H1 (cell line): ENCODE measurements at regions of chr22 and their contacts with region 1.

Region 1: GRCh38 chr22:25110846-25111578 is 88.6 kb upstream of the CRYBB3 start:
- DNase-seq: peak; percentile 61 to 81
- H3K4me3 ChIP-seq: peak overlapping the region; percentile 52 to 81 (median 66)
- H3K27ac ChIP-seq: peak overlapping the region; percentile 73
- H3K4me1 ChIP-seq: peaks cover 0 to 19% (median 9%) of the 10 kb centered on the region in 4 experiments; a peak in 6 of 7 replicates
- H3K27me3 ChIP-seq: 0 out of 7 replicates have a peak, but pooled peaks cover 0 to 2% (median 0%) of the 10 kb centered on the region in 4 experiments
- CTCF ChIP-seq: peak; percentile 59 to 91 (median 70)
- EP300 ChIP-seq: peak in 1 of 2 experiments; percentile 49; a peak in 1 of 3 replicates
- POLR2A ChIP-seq: no peak
- RAD21 ChIP-seq: peak; percentile 56 to 65

Region 2: GRCh38 chr22:25013607-25014006 is 97.4 kb before region 1 on chr22:
- CTCF ChIA-PET with region 1: no interaction called
- POLR2A ChIA-PET with region 1: no interaction called
- DNase-seq: no peak
- H3K4me3 ChIP-seq: no peak overlapping the region
- H3K27ac ChIP-seq: no peak overlapping the region
- H3K4me1 ChIP-seq: peaks cover 0 to 6% (median 4%) of the 10 kb centered on the region in 4 experiments; a peak in 4 of 7 replicates
- H3K27me3 ChIP-seq: no peaks in the 10 kb centered on the region
- CTCF ChIP-seq: no peak
- EP300 ChIP-seq: no peak
- POLR2A ChIP-seq: no peak
- RAD21 ChIP-seq: no peak

Region 3: GRCh38 chr22:25125693-25126357 is 14.8 kb after region 1 on chr22:
- CTCF ChIA-PET with region 1: interaction called, 18 read pairs
- POLR2A ChIA-PET with region 1: interaction called, 5 read pairs
- DNase-seq: no peak
- H3K4me3 ChIP-seq: no peak overlapping the region
- H3K27ac ChIP-seq: no peak overlapping the region
- H3K4me1 ChIP-seq: peaks cover 0 to 9% (median 6%) of the 10 kb centered on the region in 4 experiments; a peak in 2 of 7 replicates
- H3K27me3 ChIP-seq: no peaks in the 10 kb centered on the region; a peak in 1 of 7 replicates
- CTCF ChIP-seq: no peak
- EP300 ChIP-seq: no peak
- POLR2A ChIP-seq: no peak
- RAD21 ChIP-seq: no peak

Region 4: GRCh38 chr22:25139062-25139461 is 28.1 kb after region 1 on chr22:
- CTCF ChIA-PET with region 1: interaction called, 14 read pairs
- POLR2A ChIA-PET with region 1: interaction called, 5 read pairs
- DNase-seq: no peak
- H3K4me3 ChIP-seq: no peak overlapping the region
- H3K27ac ChIP-seq: no peak overlapping the region
- H3K4me1 ChIP-seq: no peaks in the 10 kb centered on the region
- H3K27me3 ChIP-seq: no peaks in the 10 kb centered on the region; a peak in 1 of 7 replicates
- CTCF ChIP-seq: no peak
- EP300 ChIP-seq: no peak
- POLR2A ChIP-seq: no peak
- RAD21 ChIP-seq: no peak

Region 5: DNA sequence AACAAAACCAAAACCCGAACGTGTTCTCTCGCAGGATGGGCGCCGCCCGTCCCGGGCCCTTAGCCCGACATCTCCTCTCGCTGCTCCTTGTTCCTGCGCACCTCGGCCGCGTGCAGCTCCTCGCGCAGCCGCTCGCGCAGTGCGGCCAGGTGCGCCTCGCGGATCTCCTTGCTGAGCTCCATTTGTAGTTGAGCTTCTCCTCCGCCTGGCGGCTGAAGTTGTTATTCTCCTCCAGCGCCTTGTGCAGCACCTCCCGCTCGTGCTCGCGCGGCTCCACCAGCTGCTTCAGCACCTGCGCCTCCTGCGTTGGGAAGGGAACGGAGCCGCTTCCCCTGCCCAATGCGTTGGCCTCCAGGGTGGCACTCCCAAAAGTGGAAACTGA is 68.2 kb after region 1 on chr22:
- CTCF ChIA-PET with region 1: interaction called, 11 read pairs
- POLR2A ChIA-PET with region 1: no interaction called
- DNase-seq: peak; percentile 13 to 69
- H3K4me3 ChIP-seq: no peak overlapping the region
- H3K27ac ChIP-seq: no peak overlapping the region
- H3K4me1 ChIP-seq: 0 out of 7 replicates have a peak, but pooled peaks cover 0 to 4% (median 0%) of the 10 kb centered on the region in 4 experiments
- H3K27me3 ChIP-seq: no peaks in the 10 kb centered on the region
- CTCF ChIP-seq: peak; percentile 54 to 73 (median 59)
- EP300 ChIP-seq: no peak
- POLR2A ChIP-seq: no peak
- RAD21 ChIP-seq: peak; percentile 46 to 57; a peak in 3 of 4 replicates